Activated naive CD4-positive, alpha-beta T cell treated with anti-CD3 and anti-CD28 coated beads for 36 hours (primary cell): ENCODE measurements at regions of chr14 and their contacts with region 1.

Region 1: GRCh38 chr14:39102969-39103957 is at the start of gene SEC23A:
- DNase-seq: peak; percentile 87
- H3K4me3 Mint-ChIP-seq: peak within 1 kb of the TSS; percentile 87
- H3K27ac Mint-ChIP-seq: peak within 1 kb of the TSS; percentile 96
- H3K4me1 Mint-ChIP-seq: peaks cover 42% of the 10 kb centered on the region
- H3K27me3 Mint-ChIP-seq: no peaks in the 10 kb centered on the region
- total RNA-seq, gene SEC23A: 40.2 to 48.0 TPM

Region 2: GRCh38 chr14:39174560-39175444 is 71.5 kb after region 1 on chr14 and contains the start of gene PNN:
- CTCF ChIA-PET with region 1: no interaction called
- intact Hi-C with region 1: loop called (anchors 1 kb)
- DNase-seq: peak; percentile 98
- H3K4me3 Mint-ChIP-seq: peak within 1 kb of the TSS; percentile 100
- H3K27ac Mint-ChIP-seq: peak within 1 kb of the TSS; percentile 100
- H3K4me1 Mint-ChIP-seq: peaks cover 44% of the 10 kb centered on the region
- H3K27me3 Mint-ChIP-seq: no peaks in the 10 kb centered on the region
- total RNA-seq, gene PNN: 99.6 to 100 TPM

Region 3: DNA sequence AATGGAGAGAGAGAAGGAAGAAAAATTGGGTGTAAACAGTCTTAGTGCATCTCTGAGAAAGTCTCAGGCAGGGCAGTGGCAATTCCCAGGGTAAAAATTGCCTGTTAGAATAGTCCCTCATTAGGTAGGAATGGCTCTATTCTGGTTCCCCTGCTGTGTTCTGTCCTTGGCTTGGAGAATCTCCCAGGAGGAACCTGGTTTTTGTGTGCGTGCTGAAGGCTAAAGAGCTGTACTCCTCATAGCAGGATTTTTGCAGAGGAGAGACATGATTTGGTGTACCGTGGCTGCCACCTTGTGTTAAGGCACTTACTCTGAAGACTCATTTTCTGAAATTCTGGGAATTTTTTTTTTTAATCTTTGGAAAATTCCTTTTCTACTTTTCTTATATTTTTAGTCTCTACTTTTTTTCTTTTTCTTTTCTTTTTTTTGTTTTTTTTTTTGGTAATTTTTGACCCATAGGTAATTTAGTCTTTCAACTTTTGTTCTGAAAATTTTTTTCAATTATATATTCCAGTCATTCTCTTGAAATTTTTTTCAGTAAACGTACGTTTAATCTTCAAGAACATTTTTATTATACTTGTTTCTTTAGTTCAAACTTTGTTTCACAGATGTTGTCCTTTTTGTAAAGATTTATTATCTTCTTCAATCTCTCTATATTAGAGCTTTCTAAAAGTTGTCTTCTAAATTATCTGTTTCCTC is 265.1 kb after region 1 on chr14:
- CTCF ChIA-PET with region 1: no interaction called
- intact Hi-C with region 1: loop called (anchors 1 kb)
- DNase-seq: peak; percentile 63
- H3K4me3 Mint-ChIP-seq: no peak overlapping the region
- H3K27ac Mint-ChIP-seq: no peak overlapping the region
- H3K4me1 Mint-ChIP-seq: no peaks in the 10 kb centered on the region
- H3K27me3 Mint-ChIP-seq: no peaks in the 10 kb centered on the region

Region 4: DNA sequence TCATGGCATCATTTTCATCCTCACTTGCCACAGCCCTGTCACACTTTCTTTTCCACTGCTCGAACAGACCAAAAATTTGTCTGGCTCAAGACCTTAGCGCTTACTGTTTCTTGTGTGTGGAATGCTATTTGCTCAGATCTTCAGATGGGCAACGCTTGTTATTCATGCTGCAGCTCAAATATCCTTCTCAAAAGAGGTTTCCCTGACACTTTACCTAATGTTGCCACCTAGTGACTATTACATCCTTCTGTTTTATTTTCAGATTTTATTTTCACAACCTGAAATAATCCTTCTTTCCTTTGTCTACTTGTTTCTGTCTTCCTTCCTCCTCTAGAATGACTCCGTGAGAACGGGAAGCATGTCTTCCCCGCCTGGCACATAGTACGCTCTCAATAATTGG is 323.3 kb after region 1 on chr14:
- CTCF ChIA-PET with region 1: interaction called, 6 read pairs
- intact Hi-C with region 1: loop called (anchors 1 kb)
- DNase-seq: no peak
- H3K4me3 Mint-ChIP-seq: peak overlapping the region; percentile 45
- H3K27ac Mint-ChIP-seq: no peak overlapping the region
- H3K4me1 Mint-ChIP-seq: peaks cover 63% of the 10 kb centered on the region
- H3K27me3 Mint-ChIP-seq: no peaks in the 10 kb centered on the region